PC-3 (cell line): ENCODE measurements at regions of chr3 and their contacts with region 1.

Region 1: GRCh38 chr3:132029182-132029902 is 5.5 kb downstream of the CPNE4 start:
- DNase-seq: peak; percentile 94
- ATAC-seq: peak; percentile 98
- H3K4me3 ChIP-seq: peak overlapping the region; percentile 34
- H3K27ac ChIP-seq: peak overlapping the region; percentile 64
- H3K4me1 ChIP-seq: peaks cover 13% of the 10 kb centered on the region
- H3K27me3 ChIP-seq: no peaks in the 10 kb centered on the region
- CTCF ChIP-seq: peak; percentile 87

Region 2: DNA sequence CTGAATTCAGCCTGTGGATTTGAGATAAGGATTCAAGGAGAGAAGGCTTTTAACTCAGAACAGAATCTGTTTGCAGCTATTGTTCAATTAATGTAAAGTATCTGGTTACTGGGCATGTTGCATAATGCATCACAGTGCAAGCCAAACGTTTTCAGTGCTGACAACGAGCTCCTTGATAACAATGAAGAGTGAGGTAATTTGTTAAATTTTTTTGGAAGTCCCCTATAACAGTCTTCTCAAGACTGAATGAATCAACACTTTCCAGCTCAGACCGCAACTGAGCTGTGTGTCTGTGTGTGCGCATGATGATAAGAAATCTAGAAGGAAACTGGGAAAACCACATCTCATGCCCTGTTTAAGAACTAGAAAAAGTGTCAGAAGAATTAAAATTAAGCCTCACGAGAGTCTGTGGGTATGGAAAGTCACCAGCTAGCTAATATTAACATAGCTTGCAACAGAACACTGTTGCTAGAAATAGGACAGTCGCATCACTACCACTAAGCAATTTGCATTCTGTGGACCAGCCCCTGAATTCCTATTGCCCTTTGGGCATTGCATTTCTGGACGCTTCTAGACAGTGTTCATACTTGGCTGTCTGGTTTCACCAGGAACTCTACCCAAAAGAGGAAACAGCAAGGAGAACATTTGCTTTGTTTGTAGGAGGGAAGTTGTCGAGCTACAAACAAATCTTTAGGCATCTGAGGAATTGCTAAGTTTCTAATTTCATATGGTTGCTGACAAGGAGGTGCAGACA is 1179.1 kb before region 1 on chr3:
- CTCF ChIA-PET with region 1: no interaction called
- POLR2A ChIA-PET with region 1: no interaction called
- intact Hi-C with region 1: no loop called
- DNase-seq: peak; percentile 31
- ATAC-seq: peak; percentile 33
- H3K4me3 ChIP-seq: no peak overlapping the region
- H3K27ac ChIP-seq: no peak overlapping the region
- H3K4me1 ChIP-seq: 0 out of 2 replicates have a peak, but pooled peaks cover 6% of the 10 kb centered on the region
- H3K27me3 ChIP-seq: no peaks in the 10 kb centered on the region
- CTCF ChIP-seq: no peak

Region 3: GRCh38 chr3:131231710-131232389 is 797.5 kb before region 1 on chr3:
- CTCF ChIA-PET with region 1: no interaction called
- POLR2A ChIA-PET with region 1: no interaction called
- intact Hi-C with region 1: loop called (anchors 5 kb)
- DNase-seq: peak; percentile 49
- ATAC-seq: peak; percentile 59
- H3K4me3 ChIP-seq: no peak overlapping the region
- H3K27ac ChIP-seq: no peak overlapping the region
- H3K4me1 ChIP-seq: no peaks in the 10 kb centered on the region
- H3K27me3 ChIP-seq: no peaks in the 10 kb centered on the region
- CTCF ChIP-seq: peak; percentile 41

Region 4: GRCh38 chr3:131543714-131544113 is 485.6 kb before region 1 on chr3:
- CTCF ChIA-PET with region 1: no interaction called
- POLR2A ChIA-PET with region 1: no interaction called
- intact Hi-C with region 1: loop called (anchors 5 kb)
- DNase-seq: peak; percentile 93
- ATAC-seq: peak; percentile 96
- H3K4me3 ChIP-seq: no peak overlapping the region
- H3K27ac ChIP-seq: peak overlapping the region; percentile 63
- H3K4me1 ChIP-seq: peaks cover 22% of the 10 kb centered on the region
- H3K27me3 ChIP-seq: no peaks in the 10 kb centered on the region
- CTCF ChIP-seq: no peak; the same call in 1 of the 2 replicates

Region 5: DNA sequence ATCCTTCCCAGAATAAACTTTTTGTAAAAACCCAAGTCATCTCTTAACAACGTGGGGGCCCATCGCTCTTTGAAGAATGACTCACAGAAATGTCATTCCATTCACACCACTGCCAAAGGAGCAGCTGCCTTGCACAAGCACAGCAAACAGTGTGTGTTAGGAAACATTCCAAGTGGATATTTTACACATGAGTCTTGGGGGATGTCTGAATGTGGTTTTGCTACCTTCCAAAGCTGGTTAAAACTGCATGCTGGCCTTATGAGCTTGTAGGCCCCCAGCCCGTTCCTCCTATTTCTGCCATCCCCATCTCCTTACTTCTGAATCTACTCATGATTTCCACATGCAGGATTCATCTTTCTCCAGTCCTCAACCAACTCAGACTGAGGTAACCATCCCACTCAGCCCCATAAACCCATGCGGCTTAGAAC is 125.3 kb before region 1 on chr3:
- CTCF ChIA-PET with region 1: no interaction called
- POLR2A ChIA-PET with region 1: no interaction called
- intact Hi-C with region 1: loop called (anchors 2 kb)
- DNase-seq: peak; percentile 93
- ATAC-seq: peak; percentile 92
- H3K4me3 ChIP-seq: no peak overlapping the region; the same call in 1 of the 2 replicates
- H3K27ac ChIP-seq: peak overlapping the region; percentile 88
- H3K4me1 ChIP-seq: peaks cover 28% of the 10 kb centered on the region
- H3K27me3 ChIP-seq: no peaks in the 10 kb centered on the region
- CTCF ChIP-seq: no peak

Region 6: GRCh38 chr3:132273036-132273435 is 243.7 kb after region 1 on chr3:
- CTCF ChIA-PET with region 1: no interaction called
- POLR2A ChIA-PET with region 1: no interaction called
- intact Hi-C with region 1: no loop called
- DNase-seq: no peak
- ATAC-seq: no peak
- H3K4me3 ChIP-seq: no peak overlapping the region
- H3K27ac ChIP-seq: no peak overlapping the region
- H3K4me1 ChIP-seq: no peaks in the 10 kb centered on the region
- H3K27me3 ChIP-seq: no peaks in the 10 kb centered on the region
- CTCF ChIP-seq: no peak

Region 7: GRCh38 chr3:132448216-132448961 is 419.0 kb after region 1 on chr3:
- CTCF ChIA-PET with region 1: no interaction called
- POLR2A ChIA-PET with region 1: no interaction called
- intact Hi-C with region 1: no loop called
- DNase-seq: no peak
- ATAC-seq: no peak
- H3K4me3 ChIP-seq: no peak overlapping the region
- H3K27ac ChIP-seq: no peak overlapping the region
- H3K4me1 ChIP-seq: no peaks in the 10 kb centered on the region
- H3K27me3 ChIP-seq: no peaks in the 10 kb centered on the region
- CTCF ChIP-seq: no peak